H1 (cell line): ENCODE measurements at regions of chr7 and their contacts with region 1.

Region 1: DNA sequence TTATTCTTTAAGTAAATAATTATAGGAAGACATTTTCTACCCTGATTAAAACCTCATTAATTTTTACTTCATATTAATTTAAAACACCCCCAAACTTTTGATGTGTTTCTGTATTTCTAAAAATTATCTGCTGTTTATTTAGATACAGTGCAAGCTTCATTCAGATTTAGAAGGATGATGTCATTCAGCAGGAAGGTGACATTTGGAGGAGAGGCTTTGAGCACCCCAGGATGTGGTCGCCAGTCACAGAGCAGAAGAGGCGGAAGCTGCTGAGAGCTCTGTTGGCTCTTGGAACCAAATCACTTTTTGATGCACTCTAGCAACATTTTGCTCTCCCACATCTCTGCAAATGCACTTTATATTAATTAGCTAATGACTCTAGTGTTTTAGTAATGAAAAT is 233.9 kb upstream of the CACNA2D1 start:
- DNase-seq: no peak
- H3K4me3 ChIP-seq: no peak overlapping the region
- H3K27ac ChIP-seq: no peak overlapping the region
- H3K4me1 ChIP-seq: peaks cover 0 to 4% (median 0%) of the 10 kb centered on the region in 4 experiments; a peak in 1 of 7 replicates
- H3K27me3 ChIP-seq: no peaks in the 10 kb centered on the region
- CTCF ChIP-seq: no peak
- EP300 ChIP-seq: no peak
- POLR2A ChIP-seq: no peak
- RAD21 ChIP-seq: no peak

Region 2: GRCh38 chr7:82616059-82616728 is 61.3 kb before region 1 on chr7:
- CTCF ChIA-PET with region 1: no interaction called
- POLR2A ChIA-PET with region 1: no interaction called
- DNase-seq: no peak
- H3K4me3 ChIP-seq: no peak overlapping the region
- H3K27ac ChIP-seq: no peak overlapping the region
- H3K4me1 ChIP-seq: no peaks in the 10 kb centered on the region
- H3K27me3 ChIP-seq: no peaks in the 10 kb centered on the region
- CTCF ChIP-seq: no peak
- EP300 ChIP-seq: no peak
- POLR2A ChIP-seq: no peak
- RAD21 ChIP-seq: no peak

Region 3: DNA sequence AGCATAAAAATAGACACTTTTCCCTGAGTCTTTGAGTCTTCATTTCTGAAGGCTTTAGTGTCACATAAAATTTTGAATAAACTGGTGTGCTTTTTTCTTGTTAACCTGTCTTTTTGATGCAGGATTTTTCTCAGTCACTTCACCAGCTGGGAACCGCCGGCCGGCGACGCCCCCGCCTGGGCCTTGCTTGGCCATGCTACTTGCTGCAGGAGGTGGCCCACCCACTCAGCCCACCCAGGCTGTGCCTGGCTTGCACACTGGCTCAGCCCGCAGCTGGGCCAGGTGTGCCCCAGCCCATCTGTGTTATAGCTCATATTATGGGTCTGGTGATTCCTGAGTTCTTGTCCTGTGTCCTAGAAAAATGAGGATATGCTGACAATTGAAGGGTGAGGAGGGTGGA is 13.5 kb after region 1 on chr7:
- CTCF ChIA-PET with region 1: interaction called, 13 read pairs
- POLR2A ChIA-PET with region 1: no interaction called
- DNase-seq: no peak
- H3K4me3 ChIP-seq: no peak overlapping the region
- H3K27ac ChIP-seq: no peak overlapping the region
- H3K4me1 ChIP-seq: no peaks in the 10 kb centered on the region
- H3K27me3 ChIP-seq: no peaks in the 10 kb centered on the region
- CTCF ChIP-seq: no peak
- EP300 ChIP-seq: no peak
- POLR2A ChIP-seq: no peak
- RAD21 ChIP-seq: no peak